Ovary (tissue), 10 donors: ENCODE measurements at regions of chr17 and their contacts with region 1.

Region 1: GRCh38 chr17:45098869-45099616 is 33.3 kb downstream of the PLCD3 start:
- DNase-seq: peak; percentile 83 to 93 (median 90)
- H3K4me3 ChIP-seq: no peak overlapping the region
- H3K27ac ChIP-seq: peak overlapping the region in 1 of 2 donors; percentile 47
- H3K4me1 ChIP-seq: peaks cover 10% of the 10 kb centered on the region
- H3K27me3 ChIP-seq: no peaks in the 10 kb centered on the region
- CTCF ChIP-seq: peak; percentile 65 to 79 (median 66)
- EP300 ChIP-seq: no peak
- POLR2A ChIP-seq: no peak

Region 2: DNA sequence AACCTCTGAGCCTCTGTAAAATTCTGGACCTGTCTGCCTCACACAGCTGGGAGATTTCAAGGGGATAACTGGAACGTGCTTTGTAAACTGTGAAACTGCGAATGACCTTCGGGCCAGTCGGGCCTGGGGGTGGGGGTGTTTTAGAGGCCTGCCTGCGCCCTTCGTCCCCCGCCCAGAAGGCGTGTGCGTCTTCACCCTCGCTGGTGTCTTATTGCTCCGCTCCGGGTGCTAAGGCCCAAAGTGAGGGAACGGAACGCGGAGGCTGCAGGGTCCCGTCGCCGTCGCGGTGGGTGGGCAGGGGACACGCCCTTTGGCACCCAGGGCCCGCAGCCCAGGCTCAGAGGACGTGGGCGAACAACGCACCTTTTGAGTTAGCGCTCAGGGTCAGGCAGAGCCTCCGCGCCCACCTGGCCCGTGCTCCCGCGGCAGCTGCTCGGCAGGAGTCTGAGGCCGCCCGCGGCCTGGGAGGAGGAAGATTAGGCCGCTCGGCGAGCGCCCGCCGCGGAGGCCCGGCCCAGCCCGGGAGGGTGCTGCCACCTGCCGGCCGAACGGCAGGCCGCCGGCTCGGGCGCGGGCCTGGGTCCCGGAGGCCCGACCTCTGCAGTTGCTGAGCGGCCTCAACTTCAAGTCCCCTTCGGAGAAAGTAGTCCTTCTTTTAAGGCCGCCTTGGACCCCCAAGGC is 77.3 kb before region 1 on chr17:
- intact Hi-C with region 1: loop called in 2 of 4 experiments (anchors 5 to 10 kb)
- DNase-seq: peak; percentile 73 to 85 (median 79)
- H3K4me3 ChIP-seq: peak overlapping the region; percentile 30
- H3K27ac ChIP-seq: peak overlapping the region; percentile 60 to 79
- H3K4me1 ChIP-seq: peaks cover 9% of the 10 kb centered on the region
- H3K27me3 ChIP-seq: no peaks in the 10 kb centered on the region
- CTCF ChIP-seq: peak; percentile 86 to 97 (median 97)
- EP300 ChIP-seq: no peak
- POLR2A ChIP-seq: no peak

Region 3: GRCh38 chr17:45060797-45061605 is 38.0 kb before region 1 on chr17 and contains the start of gene NMT1:
- intact Hi-C with region 1: loop called in 1 of 4 experiments (anchors 5 kb)
- DNase-seq: peak; percentile 98 to 99 (median 98)
- H3K4me3 ChIP-seq: peak within 1 kb of the TSS; percentile 73
- H3K27ac ChIP-seq: peak within 1 kb of the TSS; percentile 69 to 75
- H3K4me1 ChIP-seq: peaks cover 9% of the 10 kb centered on the region
- H3K27me3 ChIP-seq: no peaks in the 10 kb centered on the region
- CTCF ChIP-seq: peak in 1 of 3 donors; percentile 8
- EP300 ChIP-seq: no peak
- POLR2A ChIP-seq: peak; percentile 94
- total RNA-seq, gene NMT1: 25.5 to 91.4 (median 79.3) TPM

Region 4: DNA sequence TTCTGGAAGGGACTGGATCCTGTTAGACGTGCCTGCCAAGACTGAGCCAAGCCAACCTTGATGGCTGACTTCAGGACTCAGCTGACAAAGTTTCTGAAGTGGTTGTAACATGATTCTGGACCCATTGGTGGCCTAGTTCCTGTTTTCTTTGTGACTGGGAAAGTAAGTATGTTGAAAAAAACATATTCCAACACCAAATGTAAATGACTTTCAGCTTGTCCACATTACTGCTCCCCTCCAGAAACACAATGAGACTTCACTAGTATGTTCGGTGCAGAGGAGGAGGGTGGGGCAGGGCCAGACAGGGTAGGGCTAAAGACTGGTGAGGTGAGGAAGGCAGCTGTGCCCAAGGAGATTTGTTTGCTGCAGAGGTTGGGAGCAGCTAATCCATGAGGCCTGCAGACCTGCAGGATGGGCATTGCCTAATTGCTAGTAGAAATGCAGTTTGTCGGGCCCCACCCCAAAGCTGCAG is 11.5 kb before region 1 on chr17:
- intact Hi-C with region 1: no loop called
- DNase-seq: no peak
- H3K4me3 ChIP-seq: no peak overlapping the region
- H3K27ac ChIP-seq: no peak overlapping the region
- H3K4me1 ChIP-seq: peaks cover 6% of the 10 kb centered on the region
- H3K27me3 ChIP-seq: no peaks in the 10 kb centered on the region
- CTCF ChIP-seq: no peak
- EP300 ChIP-seq: no peak
- POLR2A ChIP-seq: no peak